Activated T-helper 1 cell treated with anti-CD3 and anti-CD28 coated beads, Interleukin-12 subunit alpha, Interleukin-12 subunit beta, Interleukin-2, Interleukin-4 antibody, amounts not matched to agents 30 ng/mL and 10 ng/mL and 1 ng/mL, durations not matched to agents 14 hours and 24 hours and 36 hours (primary cell): ENCODE measurements at regions of chr4 and their contacts with region 1.

Region 1: DNA sequence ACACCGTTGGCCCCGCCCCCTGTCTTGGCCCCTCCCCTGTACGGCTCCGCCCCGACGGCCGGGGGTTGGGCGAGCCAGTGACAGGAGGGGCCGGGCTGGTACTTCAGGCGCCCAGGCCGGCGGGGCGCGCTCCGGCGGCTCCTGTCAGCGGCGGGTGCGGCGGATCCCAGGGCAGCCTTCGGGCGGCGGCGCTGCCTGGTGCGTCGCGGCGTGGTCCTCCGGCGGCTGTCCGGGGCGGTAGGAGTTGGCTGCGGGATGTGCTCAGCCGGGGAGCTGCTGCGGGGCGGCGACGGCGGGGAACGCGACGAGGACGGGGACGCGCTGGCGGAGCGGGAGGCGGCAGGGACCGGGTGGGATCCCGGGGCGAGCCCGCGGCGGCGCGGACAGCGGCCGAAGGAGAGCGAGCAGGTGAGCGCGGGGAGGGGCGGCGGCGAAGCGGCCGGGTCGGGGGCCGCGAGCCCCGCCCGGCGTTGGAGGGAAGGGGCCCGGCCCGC is at the start of gene FAM241A:
- DNase-seq: peak; percentile 80
- H3K4me3 Mint-ChIP-seq: peak within 1 kb of the TSS; percentile 98
- H3K27ac Mint-ChIP-seq: peak within 1 kb of the TSS; percentile 97
- H3K4me1 Mint-ChIP-seq: peaks cover 47% of the 10 kb centered on the region
- H3K27me3 Mint-ChIP-seq: no peaks in the 10 kb centered on the region
- total RNA-seq, gene FAM241A: 6.7 and 7.1 TPM in 2 replicates

Region 2: GRCh38 chr4:112119353-112119783 is 26.0 kb before region 1 on chr4:
- intact Hi-C with region 1: loop called (anchors 1 kb)
- DNase-seq: peak; percentile 21
- H3K4me3 Mint-ChIP-seq: peak overlapping the region; percentile 50
- H3K27ac Mint-ChIP-seq: peak overlapping the region; percentile 94
- H3K4me1 Mint-ChIP-seq: peaks cover 24% of the 10 kb centered on the region
- H3K27me3 Mint-ChIP-seq: no peaks in the 10 kb centered on the region

Region 3: DNA sequence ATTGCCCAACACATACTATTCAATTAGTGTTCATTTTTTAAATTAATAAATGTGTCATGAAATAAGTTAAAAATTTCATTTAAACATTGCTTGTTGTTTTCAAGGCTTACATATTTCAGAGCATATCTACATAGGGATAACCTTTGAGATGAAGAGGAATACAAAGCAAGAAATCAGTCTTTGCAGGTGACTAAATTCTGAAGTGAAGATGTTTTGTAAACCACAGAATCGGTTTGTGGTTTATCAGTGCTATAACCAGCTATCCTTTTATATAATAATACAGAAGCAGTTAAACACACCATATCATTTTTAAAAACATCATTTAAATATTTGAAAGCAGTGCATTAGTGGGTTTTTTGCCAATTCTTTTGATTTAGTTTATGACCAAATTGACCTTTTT is 26.8 kb after region 1 on chr4:
- intact Hi-C with region 1: loop called (anchors 1 kb)
- DNase-seq: no peak
- H3K4me3 Mint-ChIP-seq: no peak overlapping the region
- H3K27ac Mint-ChIP-seq: no peak overlapping the region
- H3K4me1 Mint-ChIP-seq: peaks cover 33% of the 10 kb centered on the region
- H3K27me3 Mint-ChIP-seq: no peaks in the 10 kb centered on the region

Region 4: DNA sequence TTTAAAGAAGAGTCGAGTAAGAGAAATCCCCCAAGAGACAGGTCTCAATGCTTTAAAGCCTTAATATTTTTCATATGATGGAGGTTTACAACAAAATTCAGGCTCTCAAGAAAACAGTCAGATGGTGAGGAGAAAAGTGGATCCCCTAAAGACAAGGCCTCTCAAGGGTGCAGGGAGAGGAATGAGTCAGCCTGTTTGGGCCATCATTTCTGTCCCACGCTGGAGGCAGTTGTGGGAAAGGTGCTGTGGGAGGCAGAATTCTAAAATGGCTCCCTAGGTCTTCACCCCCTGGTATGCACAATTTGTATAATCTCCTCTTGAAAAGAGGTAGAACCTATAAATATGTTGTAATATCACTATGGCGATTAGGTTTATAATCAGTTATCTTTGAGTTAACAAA is 145.0 kb after region 1 on chr4:
- intact Hi-C with region 1: loop called (anchors 1 kb)
- DNase-seq: no peak
- H3K4me3 Mint-ChIP-seq: peak overlapping the region; percentile 9
- H3K27ac Mint-ChIP-seq: peak overlapping the region; percentile 85
- H3K4me1 Mint-ChIP-seq: peaks cover 60% of the 10 kb centered on the region
- H3K27me3 Mint-ChIP-seq: no peaks in the 10 kb centered on the region

Region 5: GRCh38 chr4:112448306-112449132 is 303.1 kb after region 1 on chr4:
- intact Hi-C with region 1: no loop called
- DNase-seq: no peak
- H3K4me3 Mint-ChIP-seq: no peak overlapping the region
- H3K27ac Mint-ChIP-seq: no peak overlapping the region
- H3K4me1 Mint-ChIP-seq: no peaks in the 10 kb centered on the region
- H3K27me3 Mint-ChIP-seq: no peaks in the 10 kb centered on the region